GM10248 (cell line): ENCODE measurements at regions of chr19 and their contacts with region 1.

Region 1: GRCh38 chr19:51441410-51442390 is 16.6 kb downstream of the SIGLEC8 start:
- DNase-seq: peak; percentile 78
- CTCF ChIP-seq: no peak

Region 2: DNA sequence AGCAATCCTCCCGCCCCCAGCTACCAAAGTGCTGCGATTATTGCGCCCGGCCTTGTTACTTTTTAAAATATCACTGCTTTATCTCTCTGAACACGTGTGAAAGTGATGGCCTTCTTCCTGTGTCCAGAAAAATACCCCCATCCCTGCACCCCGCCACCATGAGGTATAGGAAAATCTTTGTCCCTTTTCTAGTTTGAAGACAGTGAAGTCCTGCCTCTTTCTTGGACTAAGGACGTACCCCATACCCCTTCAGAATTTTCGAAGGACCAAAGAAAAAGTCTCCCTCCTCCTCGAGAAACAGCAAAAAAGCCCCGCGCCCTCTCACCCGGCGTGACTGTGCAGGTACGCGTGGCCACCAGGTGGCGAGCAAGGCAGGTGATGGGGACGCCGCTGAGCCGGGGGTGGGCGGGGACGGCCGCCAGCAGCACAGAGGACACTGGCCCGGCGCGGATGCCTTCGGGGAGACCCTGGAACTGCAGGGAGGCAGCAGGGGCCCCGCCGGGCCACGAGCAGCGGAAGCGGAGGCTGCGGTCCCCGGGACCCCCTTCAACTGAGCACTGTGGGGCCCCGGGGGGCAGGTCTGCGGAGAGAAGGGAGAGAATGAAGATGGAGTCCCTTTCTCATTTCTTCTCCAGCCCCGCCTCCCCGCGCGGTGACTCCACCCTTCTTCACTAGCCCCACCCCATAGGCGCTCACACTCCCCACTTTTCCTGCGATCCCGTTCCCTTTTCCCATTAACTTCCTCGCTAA is 103.0 kb before region 1 on chr19:
- CTCF ChIA-PET with region 1: interaction called, 15 read pairs
- POLR2A ChIA-PET with region 1: no interaction called
- DNase-seq: peak; percentile 93
- CTCF ChIP-seq: peak; percentile 87

Region 3: DNA sequence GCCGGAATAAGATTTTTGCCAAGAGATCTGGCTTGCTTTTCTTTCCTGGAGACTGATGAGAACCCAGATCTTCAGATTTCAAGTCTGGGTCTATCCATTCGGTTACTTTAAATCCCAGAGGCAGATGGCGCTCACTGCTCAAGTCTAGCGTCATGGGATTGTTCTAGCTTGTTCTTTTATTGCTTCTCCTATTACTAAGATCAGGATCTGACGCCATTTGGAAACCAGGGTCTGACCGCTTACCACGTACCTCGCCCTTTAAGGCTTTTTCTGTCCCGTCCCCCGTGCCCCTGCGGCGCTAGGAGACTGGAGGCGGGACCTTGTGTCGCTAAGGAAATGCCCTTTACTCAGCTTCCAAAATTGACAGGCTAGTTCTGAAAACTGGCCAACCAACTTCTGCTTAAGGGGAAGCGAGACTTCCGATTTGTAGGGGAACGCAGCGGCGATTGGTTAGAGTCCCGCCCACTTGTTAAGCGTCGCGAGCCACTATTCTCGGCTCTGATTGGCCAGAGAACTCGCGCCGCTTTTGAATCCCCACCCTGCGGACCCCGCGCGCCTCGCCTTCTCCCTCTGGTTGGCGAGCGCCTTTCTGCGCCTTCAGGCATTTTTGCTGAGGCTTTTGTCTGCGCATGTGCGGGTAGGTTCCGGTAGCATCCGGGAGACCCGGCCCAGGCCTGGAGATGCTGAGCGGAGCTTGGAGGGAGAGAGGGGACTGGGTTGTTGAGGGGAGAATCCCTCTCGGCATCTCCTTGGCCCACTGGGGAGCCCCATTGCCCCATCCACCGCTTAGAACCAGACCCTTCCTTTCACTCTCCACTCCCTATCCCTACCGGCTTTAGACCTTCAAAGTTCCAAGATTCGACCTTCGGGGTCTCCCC is 47.5 kb before region 1 on chr19:
- CTCF ChIA-PET with region 1: interaction called, 67 read pairs
- POLR2A ChIA-PET with region 1: no interaction called
- DNase-seq: peak; percentile 94
- CTCF ChIP-seq: peak; percentile 4

Region 4: GRCh38 chr19:51427201-51427600 is 14.5 kb before region 1 on chr19:
- CTCF ChIA-PET with region 1: interaction called, 109 read pairs
- POLR2A ChIA-PET with region 1: no interaction called
- DNase-seq: no peak
- CTCF ChIP-seq: no peak

Region 5: DNA sequence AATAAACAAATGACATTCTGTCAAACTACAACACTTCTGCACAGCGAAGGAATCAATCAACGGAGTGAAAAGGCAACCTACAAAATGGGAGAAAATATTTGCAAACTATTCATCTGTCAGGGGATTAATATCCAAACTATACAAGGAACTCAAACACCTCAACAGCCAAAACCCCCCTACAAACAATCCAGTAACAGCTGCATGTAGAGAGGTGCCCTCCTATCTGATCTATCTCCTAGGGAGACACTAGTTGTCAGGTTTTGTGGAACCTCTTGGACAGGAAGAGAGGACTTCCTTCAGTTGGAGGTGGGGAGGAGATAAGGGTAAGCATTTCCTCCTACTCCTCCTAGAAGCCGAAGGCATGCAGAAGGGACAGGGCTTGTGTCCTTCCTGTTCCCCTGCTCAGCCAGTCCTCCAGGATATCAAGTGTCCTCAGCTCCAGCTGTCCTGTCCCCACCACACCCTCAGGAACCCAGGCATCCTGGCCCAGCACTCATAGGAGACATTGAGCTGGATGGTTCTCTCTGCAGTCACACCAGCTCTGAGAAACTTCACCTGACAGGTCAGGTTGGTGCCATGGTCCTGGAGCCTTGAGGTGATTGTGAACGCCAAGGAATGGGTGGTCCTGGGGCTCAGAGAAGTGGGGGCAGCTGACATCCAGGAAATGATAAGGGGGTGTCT is 26.3 kb after region 1 on chr19:
- CTCF ChIA-PET with region 1: interaction called, 11 read pairs
- POLR2A ChIA-PET with region 1: no interaction called
- DNase-seq: no peak
- CTCF ChIP-seq: no peak